WTC11 (cell line): ENCODE measurements at regions of chr10 and their contacts with region 1.

Region 1: DNA sequence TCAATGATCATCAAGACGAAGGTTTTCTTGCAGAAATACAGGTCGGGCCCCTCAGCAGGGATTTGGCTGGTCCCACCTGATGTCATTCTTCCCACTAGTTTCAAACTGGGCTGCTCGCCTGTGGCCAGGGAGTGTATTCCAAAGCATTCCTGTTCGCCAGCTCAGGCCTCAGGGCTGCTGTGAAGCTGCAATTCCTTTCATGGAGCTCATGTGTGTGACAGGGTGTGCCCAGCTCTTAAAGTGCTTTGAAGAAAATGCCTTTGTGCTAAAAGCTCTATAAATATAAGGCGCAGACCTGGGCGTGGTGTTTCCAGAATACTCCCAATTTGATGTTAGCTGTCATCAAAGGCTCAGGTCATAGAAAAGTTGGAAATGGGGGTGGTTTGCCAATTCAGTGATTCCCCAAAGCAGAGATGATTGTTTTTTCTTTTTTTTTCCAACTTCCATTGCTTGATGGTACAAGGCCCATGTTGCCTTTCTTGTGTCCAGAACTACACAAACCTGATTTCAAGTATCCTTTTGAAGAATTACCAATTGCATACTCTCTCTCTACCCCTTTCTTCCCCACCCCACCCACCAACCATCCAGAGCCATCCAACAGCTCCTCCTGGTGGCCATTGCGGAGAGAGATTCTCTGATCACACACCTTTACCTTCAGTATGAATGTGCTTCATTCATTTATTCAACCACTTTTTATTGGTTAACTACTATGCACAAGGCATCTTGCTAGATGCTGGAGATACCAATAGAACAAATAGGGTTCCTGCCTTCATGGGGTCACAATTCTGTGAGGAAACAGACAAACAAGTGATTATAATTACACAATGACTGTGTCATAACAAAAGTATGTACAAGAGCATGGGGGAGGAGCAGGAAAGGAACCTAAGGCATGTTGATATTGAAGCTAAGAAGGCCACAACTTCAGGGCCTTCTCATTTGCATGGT is 297.3 kb upstream of the LYZL1 start:
- DNase-seq: peak; percentile 79
- ATAC-seq: peak; percentile 92
- H3K4me3 Mint-ChIP-seq: no peak overlapping the region
- H3K27ac Mint-ChIP-seq: peak overlapping the region; percentile 79; the same call in 1 of the 2 replicates
- H3K4me1 Mint-ChIP-seq: peaks cover 18% of the 10 kb centered on the region
- H3K27me3 Mint-ChIP-seq: no peaks in the 10 kb centered on the region
- CTCF ChIP-seq: peak; percentile 66

Region 2: DNA sequence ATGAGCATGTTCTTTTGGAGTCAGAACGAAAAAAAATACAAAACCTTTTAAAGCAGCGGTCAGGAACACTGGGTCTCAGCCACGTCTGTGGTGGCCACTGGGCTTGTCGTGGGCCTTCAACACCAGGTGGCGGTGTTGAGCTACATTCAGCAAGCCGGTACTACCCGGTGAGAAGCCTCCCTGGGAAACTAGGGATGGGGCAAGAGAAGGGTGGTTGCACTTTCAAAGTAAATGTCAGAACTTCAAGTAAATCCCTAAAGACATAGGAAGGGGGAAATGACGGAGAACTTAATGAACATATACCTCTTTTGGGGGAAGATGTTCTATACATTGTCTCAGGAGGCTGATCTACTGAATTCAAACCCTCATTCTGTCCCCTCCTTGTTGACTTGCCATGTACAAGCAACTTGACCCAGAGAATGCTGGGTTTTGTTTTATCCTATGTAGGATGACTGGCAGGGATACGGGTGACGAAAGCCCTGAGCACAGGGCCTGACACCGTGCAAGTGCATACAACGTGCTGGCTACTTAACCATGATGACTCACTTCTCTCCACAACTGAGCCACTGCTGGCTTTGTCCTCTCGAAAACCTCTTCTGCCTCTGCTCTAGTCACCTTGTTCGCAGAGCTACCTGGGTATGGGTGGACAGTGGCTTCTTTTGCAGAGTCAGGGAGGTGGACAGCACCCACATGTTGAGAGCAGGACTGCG is 363.3 kb before region 1 on chr10:
- CTCF ChIA-PET with region 1: interaction called, 11 read pairs
- POLR2A ChIA-PET with region 1: no interaction called
- DNase-seq: peak; percentile 87
- ATAC-seq: peak; percentile 86
- H3K4me3 Mint-ChIP-seq: no peak overlapping the region
- H3K27ac Mint-ChIP-seq: no peak overlapping the region
- H3K4me1 Mint-ChIP-seq: 0 out of 2 replicates have a peak, but pooled peaks cover 2% of the 10 kb centered on the region
- H3K27me3 Mint-ChIP-seq: no peaks in the 10 kb centered on the region; the same call in 1 of the 2 replicates
- CTCF ChIP-seq: peak; percentile 86

Region 3: GRCh38 chr10:28663576-28664313 is 327.9 kb before region 1 on chr10:
- CTCF ChIA-PET with region 1: interaction called, 67 read pairs
- POLR2A ChIA-PET with region 1: no interaction called
- DNase-seq: peak; percentile 87
- ATAC-seq: peak; percentile 73
- H3K4me3 Mint-ChIP-seq: no peak overlapping the region
- H3K27ac Mint-ChIP-seq: no peak overlapping the region
- H3K4me1 Mint-ChIP-seq: peaks cover 15% of the 10 kb centered on the region
- H3K27me3 Mint-ChIP-seq: peaks cover 21% of the 10 kb centered on the region
- CTCF ChIP-seq: peak; percentile 94

Region 4: GRCh38 chr10:28939281-28940157 is 52.1 kb before region 1 on chr10:
- CTCF ChIA-PET with region 1: interaction called, 18 read pairs
- POLR2A ChIA-PET with region 1: no interaction called
- DNase-seq: peak; percentile 88
- ATAC-seq: peak; percentile 93
- H3K4me3 Mint-ChIP-seq: peak overlapping the region; percentile 75
- H3K27ac Mint-ChIP-seq: peak overlapping the region; percentile 89
- H3K4me1 Mint-ChIP-seq: peaks cover 17% of the 10 kb centered on the region
- H3K27me3 Mint-ChIP-seq: no peaks in the 10 kb centered on the region
- CTCF ChIP-seq: peak; percentile 65

Region 5: DNA sequence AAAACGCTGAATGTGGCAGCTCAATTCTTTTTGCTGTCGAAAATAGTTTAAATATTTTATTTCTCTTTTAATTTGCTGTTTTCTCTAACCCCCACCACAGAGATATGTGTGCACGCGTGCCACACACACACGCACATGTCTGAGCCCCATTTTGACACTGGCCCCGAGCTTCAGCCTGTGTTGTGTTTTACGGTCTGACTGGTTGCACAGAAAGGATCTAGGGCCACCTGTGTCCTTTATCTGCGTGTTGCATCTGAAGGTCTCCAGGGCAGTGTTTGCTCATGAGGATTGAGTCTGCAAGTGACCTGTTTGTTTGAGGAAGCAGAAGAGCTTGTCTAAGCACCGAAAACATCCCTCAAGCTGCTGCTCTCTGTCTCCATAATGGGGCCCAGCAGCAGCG is 30.9 kb after region 1 on chr10:
- CTCF ChIA-PET with region 1: interaction called, 12 read pairs
- POLR2A ChIA-PET with region 1: no interaction called
- DNase-seq: no peak
- ATAC-seq: no peak
- H3K4me3 Mint-ChIP-seq: no peak overlapping the region
- H3K27ac Mint-ChIP-seq: peak overlapping the region; percentile 42; the same call in 1 of the 2 replicates
- H3K4me1 Mint-ChIP-seq: peaks cover 19% of the 10 kb centered on the region
- H3K27me3 Mint-ChIP-seq: peaks cover 5% of the 10 kb centered on the region
- CTCF ChIP-seq: no peak

Region 6: GRCh38 chr10:29127037-29127700 is 135.6 kb after region 1 on chr10:
- CTCF ChIA-PET with region 1: interaction called, 11 read pairs
- POLR2A ChIA-PET with region 1: no interaction called
- DNase-seq: no peak
- ATAC-seq: no peak
- H3K4me3 Mint-ChIP-seq: no peak overlapping the region
- H3K27ac Mint-ChIP-seq: no peak overlapping the region
- H3K4me1 Mint-ChIP-seq: peaks cover 25% of the 10 kb centered on the region
- H3K27me3 Mint-ChIP-seq: no peaks in the 10 kb centered on the region; the same call in 1 of the 2 replicates
- CTCF ChIP-seq: no peak